ENCODE measurements at regions of chr21 and their contacts with region 1.

Region 1: GRCh38 chr21:17512253-17513213 is at the start of gene CXADR:
- DNase-seq: peak; percentile 76 to 92
- H3K4me3 ChIP-seq: peak within 1 kb of the TSS; percentile 89
- H3K27ac ChIP-seq: peak within 1 kb of the TSS; percentile 88
- H3K4me1 ChIP-seq: peaks cover 24% of the 10 kb centered on the region
- H3K27me3 ChIP-seq: no peaks in the 10 kb centered on the region
- CTCF ChIP-seq: peak; percentile 68
- total RNA-seq, gene CXADR: 12.7 and 21.7 TPM in 2 replicates

Region 2: DNA sequence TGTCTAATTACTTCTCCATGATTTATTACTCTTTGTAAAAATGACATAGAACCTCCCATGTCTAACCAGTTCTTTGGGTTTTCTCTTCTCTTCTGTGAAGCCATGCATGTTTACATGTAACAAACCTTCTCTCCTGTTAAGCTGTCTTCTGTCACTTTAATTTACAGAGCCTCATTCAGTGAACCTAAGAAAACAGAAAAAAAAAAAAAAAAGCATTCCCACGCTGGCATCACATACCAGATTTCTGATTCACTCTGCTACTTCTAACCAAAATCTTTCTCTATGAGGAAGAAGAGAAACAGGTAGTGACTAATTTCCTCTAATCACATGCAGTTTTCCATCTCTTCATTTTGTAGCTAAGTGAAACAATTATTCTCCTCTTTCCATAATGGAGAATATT is 141.1 kb before region 1 on chr21:
- CTCF ChIA-PET with region 1: no interaction called
- POLR2A ChIA-PET with region 1: no interaction called
- intact Hi-C with region 1: loop called (anchors 5 kb)
- DNase-seq: peak in 1 of 2 experiments; percentile 92
- H3K4me3 ChIP-seq: no peak overlapping the region
- H3K27ac ChIP-seq: peak overlapping the region; percentile 86
- H3K4me1 ChIP-seq: peaks cover 27% of the 10 kb centered on the region
- H3K27me3 ChIP-seq: no peaks in the 10 kb centered on the region
- CTCF ChIP-seq: no peak

Region 3: DNA sequence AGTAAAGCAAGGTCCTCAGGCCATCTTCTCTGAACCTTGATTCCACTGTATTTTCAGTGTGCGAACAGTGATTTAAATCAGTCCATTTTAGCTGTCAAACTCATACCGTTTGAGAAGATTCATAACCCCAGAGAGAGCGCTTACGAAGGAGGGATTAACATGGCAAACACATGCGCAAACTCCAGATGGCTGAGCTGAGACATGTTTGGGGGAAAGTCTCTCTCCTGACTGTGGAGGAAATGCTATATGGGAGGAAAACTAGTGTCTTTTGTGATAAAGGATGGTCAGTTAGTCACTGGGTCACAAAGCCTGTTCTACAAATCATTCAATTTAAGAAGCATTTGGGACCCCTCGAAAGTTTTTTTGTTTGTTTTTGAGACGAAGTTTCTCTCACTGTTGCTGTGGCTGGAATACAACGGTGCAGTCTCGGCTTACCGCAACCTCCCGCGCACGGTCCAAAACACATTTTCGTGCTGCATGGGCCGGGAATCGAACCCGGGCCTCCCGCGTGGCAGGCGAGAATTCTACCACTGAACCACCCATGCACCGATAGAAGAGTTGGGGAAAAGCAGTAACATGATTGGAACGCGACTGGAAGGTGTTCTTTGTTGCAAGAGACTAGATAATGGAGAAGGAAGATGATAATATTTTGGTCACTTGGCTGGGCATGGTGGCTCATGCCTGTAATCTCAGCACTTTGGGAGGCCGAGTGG is 58.1 kb before region 1 on chr21:
- CTCF ChIA-PET with region 1: no interaction called
- POLR2A ChIA-PET with region 1: no interaction called
- intact Hi-C with region 1: loop called (anchors 2 kb)
- DNase-seq: peak; percentile 79 to 84
- H3K4me3 ChIP-seq: peak overlapping the region; percentile 56
- H3K27ac ChIP-seq: peak overlapping the region; percentile 47
- H3K4me1 ChIP-seq: peaks cover 16% of the 10 kb centered on the region
- H3K27me3 ChIP-seq: no peaks in the 10 kb centered on the region
- CTCF ChIP-seq: no peak

Region 4: GRCh38 chr21:17466166-17466565 is 46.4 kb before region 1 on chr21:
- CTCF ChIA-PET with region 1: no interaction called
- POLR2A ChIA-PET with region 1: no interaction called
- intact Hi-C with region 1: no loop called
- DNase-seq: peak; percentile 13 to 39
- H3K4me3 ChIP-seq: no peak overlapping the region
- H3K27ac ChIP-seq: no peak overlapping the region
- H3K4me1 ChIP-seq: 0 out of 2 replicates have a peak, but pooled peaks cover 8% of the 10 kb centered on the region
- H3K27me3 ChIP-seq: no peaks in the 10 kb centered on the region
- CTCF ChIP-seq: no peak

Region 5: GRCh38 chr21:17527240-17527639 is 14.7 kb after region 1 on chr21:
- CTCF ChIA-PET with region 1: interaction called, 3 read pairs
- POLR2A ChIA-PET with region 1: interaction called, 5 read pairs
- intact Hi-C with region 1: loop called (anchors 1 kb)
- DNase-seq: peak; percentile 34 to 96
- H3K4me3 ChIP-seq: no peak overlapping the region
- H3K27ac ChIP-seq: peak overlapping the region; percentile 48
- H3K4me1 ChIP-seq: peaks cover 61% of the 10 kb centered on the region
- H3K27me3 ChIP-seq: no peaks in the 10 kb centered on the region
- CTCF ChIP-seq: no peak

Region 6: DNA sequence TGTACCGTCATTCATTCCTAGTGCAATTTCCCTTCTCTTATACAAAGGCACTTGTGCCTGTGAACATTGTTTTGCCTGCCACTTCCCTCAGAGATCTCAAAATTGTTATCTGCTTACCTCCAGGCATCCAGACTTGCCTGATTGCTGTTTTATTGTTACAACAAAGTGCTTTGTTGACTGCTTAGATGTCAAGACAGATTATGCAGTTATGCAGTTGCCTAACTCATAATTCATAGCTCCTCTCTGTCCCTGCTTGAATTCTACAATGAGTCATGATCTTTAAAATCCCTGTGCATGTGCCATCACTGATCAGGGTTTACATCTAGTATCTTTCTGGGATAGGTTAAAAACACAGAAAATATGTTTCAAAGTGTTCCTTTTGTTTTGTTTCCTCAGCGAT is 24.8 kb after region 1 on chr21:
- CTCF ChIA-PET with region 1: no interaction called
- POLR2A ChIA-PET with region 1: interaction called, 6 read pairs
- intact Hi-C with region 1: loop called (anchors 1 kb)
- DNase-seq: peak; percentile 11 to 90
- H3K4me3 ChIP-seq: no peak overlapping the region
- H3K27ac ChIP-seq: peak overlapping the region; percentile 12; the same call in 1 of the 2 replicates
- H3K4me1 ChIP-seq: peaks cover 20% of the 10 kb centered on the region
- H3K27me3 ChIP-seq: no peaks in the 10 kb centered on the region
- CTCF ChIP-seq: no peak

Region 7: DNA sequence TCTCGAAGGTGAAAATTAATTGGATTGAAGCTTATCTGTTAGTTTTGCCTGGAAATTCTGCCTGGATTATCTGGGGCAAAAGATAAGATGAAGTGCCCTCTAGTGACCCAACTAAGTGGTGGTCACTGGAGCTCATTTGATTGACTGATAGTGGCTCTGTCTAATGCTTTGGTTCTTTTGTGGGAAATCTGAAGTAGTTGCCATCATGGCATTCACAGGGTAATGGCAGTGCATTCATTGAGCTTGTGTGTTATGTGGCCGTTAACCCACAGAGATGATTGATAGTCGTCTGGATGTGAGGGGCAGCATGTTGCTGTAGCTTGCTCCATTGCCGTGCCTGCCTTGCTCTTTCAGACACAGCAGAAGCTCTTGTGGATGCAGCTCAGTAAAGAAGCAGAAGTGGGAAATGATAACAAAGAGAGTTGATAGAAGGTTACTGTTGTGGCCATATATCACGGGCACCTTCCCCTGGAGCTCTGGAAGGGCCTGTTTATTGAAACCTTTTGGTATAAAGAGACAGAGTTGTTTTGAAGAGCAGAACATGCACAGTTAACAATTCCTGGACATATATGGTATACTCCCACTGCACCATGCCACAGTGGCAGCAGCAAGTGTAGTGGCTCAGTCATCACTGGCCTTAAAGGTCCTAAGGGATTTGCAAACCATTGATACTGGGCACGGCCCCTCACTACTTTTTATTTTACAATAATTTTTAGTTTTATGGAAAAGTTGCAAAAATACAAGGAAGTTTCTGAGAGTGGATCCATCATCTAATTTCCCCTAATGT is 42.3 kb after region 1 on chr21:
- CTCF ChIA-PET with region 1: no interaction called
- POLR2A ChIA-PET with region 1: interaction called, 4 read pairs
- intact Hi-C with region 1: loop called (anchors 2 kb)
- DNase-seq: no peak
- H3K4me3 ChIP-seq: no peak overlapping the region
- H3K27ac ChIP-seq: no peak overlapping the region
- H3K4me1 ChIP-seq: 0 out of 2 replicates have a peak, but pooled peaks cover 6% of the 10 kb centered on the region
- H3K27me3 ChIP-seq: no peaks in the 10 kb centered on the region
- CTCF ChIP-seq: peak; percentile 53; the same call in 1 of the 2 replicates

Region 8: DNA sequence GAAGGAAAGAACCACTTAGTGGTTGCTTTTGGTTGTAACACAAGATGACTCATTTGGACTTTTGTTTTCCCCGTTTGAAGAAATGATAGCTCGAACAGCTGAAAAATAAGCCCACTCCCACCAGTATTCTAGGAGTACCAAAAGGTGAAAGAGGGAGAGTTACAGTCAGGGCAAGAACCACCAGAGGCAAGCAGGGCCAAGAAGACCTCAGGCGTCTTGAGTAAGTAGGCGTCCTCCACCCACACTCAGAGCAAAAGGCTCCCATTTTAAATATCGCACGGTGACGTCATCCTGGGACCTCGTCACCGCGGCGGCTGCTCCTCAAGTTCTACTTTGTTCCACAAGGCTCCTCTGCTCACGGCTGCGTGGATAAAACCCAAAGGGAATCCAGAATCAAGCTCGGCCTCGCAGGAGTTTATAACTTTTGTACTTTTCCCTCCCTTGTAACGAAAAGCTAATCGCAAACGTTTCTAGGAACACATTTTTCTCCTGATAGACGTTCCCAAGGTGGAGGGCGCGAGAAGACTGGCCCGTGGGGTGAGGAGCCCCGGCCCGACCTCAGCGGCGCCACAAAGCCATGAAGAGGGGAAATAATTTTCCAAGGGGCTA is 99.0 kb after region 1 on chr21:
- CTCF ChIA-PET with region 1: interaction called, 3 read pairs
- POLR2A ChIA-PET with region 1: no interaction called
- intact Hi-C with region 1: loop called (anchors 5 kb)
- DNase-seq: peak; percentile 61 to 73
- H3K4me3 ChIP-seq: peak overlapping the region; percentile 88
- H3K27ac ChIP-seq: peak overlapping the region; percentile 45
- H3K4me1 ChIP-seq: peaks cover 11% of the 10 kb centered on the region
- H3K27me3 ChIP-seq: no peaks in the 10 kb centered on the region
- CTCF ChIP-seq: no peak